IMR-90 (cell line): ENCODE measurements at regions of chr1 and their contacts with region 1.

Region 1: DNA sequence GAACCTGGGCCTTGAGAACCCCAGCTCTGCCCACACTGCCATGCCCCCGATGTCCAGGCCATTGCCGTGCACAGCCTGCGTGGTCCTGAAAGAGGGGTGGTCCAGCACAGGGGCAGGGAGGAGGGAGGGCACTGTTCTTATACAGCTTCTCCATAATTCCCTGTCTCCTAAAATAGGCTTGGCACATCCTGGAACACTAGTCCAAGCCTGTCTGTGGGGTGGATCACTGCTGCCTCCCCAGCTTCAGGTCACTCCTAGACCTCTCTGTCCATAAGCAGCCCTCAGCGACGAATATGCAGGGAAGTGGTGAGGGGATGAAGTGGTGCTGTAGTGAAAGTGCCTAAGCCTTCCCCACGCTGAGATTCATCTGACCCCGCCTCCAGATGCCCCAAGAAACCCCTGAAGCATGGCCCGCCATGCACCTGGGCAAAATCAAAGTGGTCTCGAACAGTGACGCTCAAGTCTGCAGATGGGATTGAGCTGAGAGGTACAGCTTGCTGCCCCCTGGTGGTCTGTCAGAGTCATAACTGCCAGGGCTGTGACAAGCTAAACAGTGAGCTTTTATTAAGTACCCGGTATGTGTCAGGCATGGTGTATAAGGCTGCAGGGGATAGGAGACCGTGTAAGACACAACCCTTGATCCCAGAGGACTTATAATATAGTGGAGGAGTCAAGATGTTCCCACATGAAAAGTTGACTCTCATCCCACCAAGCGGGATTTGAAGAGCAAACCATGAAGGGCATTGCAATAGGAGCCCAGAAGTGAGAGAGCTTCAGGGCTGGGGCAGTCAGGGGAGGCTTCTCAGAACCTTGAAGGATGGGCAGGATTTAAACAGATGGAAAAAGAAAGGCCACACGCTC is 66.6 kb downstream of the FAM163A start:
- DNase-seq: peak; percentile 78
- ATAC-seq: peak; percentile 72
- H3K4me3 ChIP-seq: no peak overlapping the region
- H3K27ac ChIP-seq: no peak overlapping the region
- H3K4me1 ChIP-seq: peaks cover 9% of the 10 kb centered on the region
- H3K27me3 ChIP-seq: peaks cover 43% of the 10 kb centered on the region
- CTCF ChIP-seq: peak; percentile 87
- POLR2A ChIP-seq: no peak
- RAD21 ChIP-seq: peak; percentile 64

Region 2: DNA sequence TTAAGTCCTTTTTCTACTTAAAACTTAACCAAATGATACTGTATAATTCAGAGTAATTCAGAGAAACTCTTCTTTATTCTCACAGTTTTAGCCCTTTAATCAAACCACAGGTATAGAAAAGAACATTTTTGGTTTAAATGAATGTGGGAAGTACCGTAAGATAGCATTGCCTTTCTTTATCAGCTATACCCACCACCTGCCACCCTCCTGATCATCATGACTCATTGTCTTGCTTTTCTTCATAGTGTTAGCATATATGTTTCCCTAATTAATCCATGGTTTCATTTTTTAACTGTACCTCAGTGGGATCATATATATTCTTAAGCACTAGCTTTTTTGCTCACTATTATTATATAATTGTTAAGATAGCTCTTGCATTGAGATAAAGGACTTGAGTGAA is 911.3 kb before region 1 on chr1:
- CTCF ChIA-PET with region 1: no interaction called
- POLR2A ChIA-PET with region 1: no interaction called
- dilution Hi-C with region 1: no loop called
- in situ Hi-C with region 1: no loop called
- intact Hi-C with region 1: no loop called
- DNase-seq: no peak
- ATAC-seq: no peak
- H3K4me3 ChIP-seq: no peak overlapping the region
- H3K27ac ChIP-seq: no peak overlapping the region
- H3K4me1 ChIP-seq: no peaks in the 10 kb centered on the region
- H3K27me3 ChIP-seq: no peaks in the 10 kb centered on the region
- CTCF ChIP-seq: no peak
- POLR2A ChIP-seq: no peak
- RAD21 ChIP-seq: no peak

Region 3: DNA sequence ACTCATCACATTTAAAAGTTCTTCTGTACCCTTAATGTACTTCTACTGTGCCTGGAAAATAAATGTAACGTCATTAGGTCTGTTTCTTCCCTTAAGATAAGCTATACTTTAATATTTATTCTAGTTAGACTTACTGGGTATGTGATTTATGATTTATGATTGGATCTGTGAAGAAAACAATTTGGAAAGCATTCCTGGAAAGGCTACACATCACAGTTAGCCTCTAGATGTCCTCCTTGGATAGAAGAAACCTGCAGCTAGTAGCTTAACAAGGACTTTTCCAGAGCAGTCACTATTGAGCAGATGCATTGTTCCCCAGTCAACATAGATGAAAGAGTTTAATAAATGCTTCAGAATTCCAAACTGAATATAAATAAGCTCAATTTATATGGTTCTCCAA is 558.1 kb before region 1 on chr1:
- CTCF ChIA-PET with region 1: no interaction called
- POLR2A ChIA-PET with region 1: no interaction called
- dilution Hi-C with region 1: no loop called
- in situ Hi-C with region 1: loop called (anchors 25 kb)
- intact Hi-C with region 1: loop called (anchors 5 kb)
- DNase-seq: peak; percentile 67
- ATAC-seq: peak; percentile 88
- H3K4me3 ChIP-seq: no peak overlapping the region
- H3K27ac ChIP-seq: no peak overlapping the region
- H3K4me1 ChIP-seq: peaks cover 2% of the 10 kb centered on the region; the same call in 1 of the 2 replicates
- H3K27me3 ChIP-seq: no peaks in the 10 kb centered on the region
- CTCF ChIP-seq: peak; percentile 68
- POLR2A ChIP-seq: no peak
- RAD21 ChIP-seq: peak; percentile 73

Region 4: GRCh38 chr1:179612361-179612760 is 197.4 kb before region 1 on chr1:
- CTCF ChIA-PET with region 1: no interaction called
- POLR2A ChIA-PET with region 1: no interaction called
- dilution Hi-C with region 1: no loop called
- in situ Hi-C with region 1: no loop called
- intact Hi-C with region 1: no loop called
- DNase-seq: no peak
- ATAC-seq: no peak
- H3K4me3 ChIP-seq: no peak overlapping the region
- H3K27ac ChIP-seq: no peak overlapping the region
- H3K4me1 ChIP-seq: no peaks in the 10 kb centered on the region
- H3K27me3 ChIP-seq: no peaks in the 10 kb centered on the region; the same call in 1 of the 2 replicates
- CTCF ChIP-seq: no peak
- POLR2A ChIP-seq: no peak
- RAD21 ChIP-seq: no peak

Region 5: DNA sequence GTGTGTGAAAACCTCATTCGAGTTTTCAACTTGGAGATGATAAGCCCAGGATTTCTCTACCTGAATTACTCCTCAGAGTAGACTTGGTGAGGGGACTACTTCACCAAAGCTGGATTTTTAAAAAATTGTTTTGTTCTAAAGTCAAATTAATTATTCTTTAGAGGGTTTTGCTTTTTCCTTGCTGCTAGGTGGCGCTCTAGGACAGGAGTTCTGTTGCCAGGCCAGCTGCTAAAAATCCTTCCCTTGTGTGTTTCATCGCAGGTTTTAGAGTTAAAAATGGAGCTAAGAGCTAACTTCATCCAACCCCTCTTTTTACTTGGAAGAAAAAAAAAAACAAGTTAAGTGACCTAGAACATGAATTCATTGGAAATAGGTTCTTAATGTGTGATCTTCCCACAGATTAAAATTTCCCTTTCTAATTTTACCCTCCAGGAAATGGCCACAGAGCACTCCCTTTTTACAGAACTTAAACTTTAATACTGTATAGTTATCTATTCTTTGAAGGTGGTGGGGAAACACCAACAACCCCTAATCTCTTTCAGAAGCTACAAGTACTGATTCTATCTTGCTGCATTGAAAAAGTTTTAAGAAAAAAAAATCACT is 103.3 kb before region 1 on chr1:
- CTCF ChIA-PET with region 1: interaction called, 131 read pairs
- POLR2A ChIA-PET with region 1: interaction called, 4 read pairs
- dilution Hi-C with region 1: no loop called
- in situ Hi-C with region 1: loop called (anchors 5 kb)
- intact Hi-C with region 1: loop called (anchors 1 kb)
- DNase-seq: peak; percentile 67
- ATAC-seq: peak; percentile 62
- H3K4me3 ChIP-seq: no peak overlapping the region
- H3K27ac ChIP-seq: no peak overlapping the region
- H3K4me1 ChIP-seq: no peaks in the 10 kb centered on the region
- H3K27me3 ChIP-seq: peaks cover 20% of the 10 kb centered on the region
- CTCF ChIP-seq: peak; percentile 91
- POLR2A ChIP-seq: no peak
- RAD21 ChIP-seq: peak; percentile 92

Region 6: DNA sequence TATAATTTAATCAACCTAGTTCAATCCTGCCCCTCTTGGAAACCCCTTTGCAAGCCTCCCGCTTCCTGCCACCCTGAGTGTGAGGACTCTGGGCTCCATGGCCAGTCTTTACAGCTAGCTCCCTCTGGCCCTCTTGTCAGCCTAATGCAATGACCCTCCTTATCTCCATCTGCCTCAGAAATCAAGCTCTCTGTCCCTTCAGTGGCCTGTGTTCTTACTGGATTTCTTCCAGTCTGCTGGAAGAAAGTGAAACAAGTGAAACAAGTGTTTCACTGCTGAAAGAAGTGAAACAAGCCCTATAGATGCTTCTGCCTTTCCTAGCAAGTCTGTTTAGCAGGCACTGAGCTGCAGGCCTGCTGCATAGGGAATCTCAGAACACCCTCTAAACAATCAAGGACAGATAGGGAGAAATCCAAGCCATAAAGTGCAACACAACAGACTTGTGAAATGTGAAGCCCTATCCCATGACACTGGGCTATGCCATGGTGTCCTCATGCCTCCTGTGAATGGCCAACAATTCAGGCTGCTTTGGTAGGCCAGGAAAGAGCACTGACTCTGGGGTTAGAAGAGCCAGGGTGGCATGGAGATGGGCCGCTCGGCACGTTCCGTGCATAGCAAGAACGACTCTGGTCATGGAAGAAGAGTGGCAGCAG is 10.7 kb before region 1 on chr1:
- CTCF ChIA-PET with region 1: interaction called, 13 read pairs
- POLR2A ChIA-PET with region 1: no interaction called
- dilution Hi-C with region 1: no loop called
- in situ Hi-C with region 1: no loop called
- intact Hi-C with region 1: no loop called
- DNase-seq: no peak
- ATAC-seq: no peak
- H3K4me3 ChIP-seq: no peak overlapping the region
- H3K27ac ChIP-seq: no peak overlapping the region
- H3K4me1 ChIP-seq: no peaks in the 10 kb centered on the region
- H3K27me3 ChIP-seq: peaks cover 59% of the 10 kb centered on the region
- CTCF ChIP-seq: no peak
- POLR2A ChIP-seq: no peak
- RAD21 ChIP-seq: no peak

Region 7: DNA sequence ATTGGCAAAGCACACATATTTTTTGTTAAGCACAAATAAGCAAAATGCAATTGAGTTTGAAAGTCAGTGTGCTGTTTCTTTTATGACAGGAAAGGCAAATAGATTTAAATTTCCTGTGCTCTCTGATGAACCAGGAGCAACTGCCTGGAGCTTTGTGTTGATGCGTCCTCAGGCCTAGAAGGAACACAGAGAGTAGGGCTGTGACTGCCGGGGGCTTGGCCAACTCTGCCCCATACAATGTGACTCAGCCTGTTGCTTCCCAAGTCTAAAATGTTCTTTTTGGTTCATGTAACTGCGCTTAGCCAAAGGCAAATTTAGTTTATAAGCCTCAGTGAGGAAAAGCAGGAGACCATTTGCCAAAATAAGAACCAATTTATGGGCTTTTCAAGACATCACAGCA is 30.4 kb after region 1 on chr1:
- CTCF ChIA-PET with region 1: interaction called, 14 read pairs
- POLR2A ChIA-PET with region 1: no interaction called
- dilution Hi-C with region 1: no loop called
- in situ Hi-C with region 1: no loop called
- intact Hi-C with region 1: no loop called
- DNase-seq: no peak
- ATAC-seq: no peak
- H3K4me3 ChIP-seq: no peak overlapping the region
- H3K27ac ChIP-seq: no peak overlapping the region
- H3K4me1 ChIP-seq: peaks cover 2% of the 10 kb centered on the region; the same call in 1 of the 2 replicates
- H3K27me3 ChIP-seq: no peaks in the 10 kb centered on the region
- CTCF ChIP-seq: no peak
- POLR2A ChIP-seq: no peak
- RAD21 ChIP-seq: no peak